H1 (cell line): ENCODE measurements at regions of chr19 and their contacts with region 1.

Region 1: DNA sequence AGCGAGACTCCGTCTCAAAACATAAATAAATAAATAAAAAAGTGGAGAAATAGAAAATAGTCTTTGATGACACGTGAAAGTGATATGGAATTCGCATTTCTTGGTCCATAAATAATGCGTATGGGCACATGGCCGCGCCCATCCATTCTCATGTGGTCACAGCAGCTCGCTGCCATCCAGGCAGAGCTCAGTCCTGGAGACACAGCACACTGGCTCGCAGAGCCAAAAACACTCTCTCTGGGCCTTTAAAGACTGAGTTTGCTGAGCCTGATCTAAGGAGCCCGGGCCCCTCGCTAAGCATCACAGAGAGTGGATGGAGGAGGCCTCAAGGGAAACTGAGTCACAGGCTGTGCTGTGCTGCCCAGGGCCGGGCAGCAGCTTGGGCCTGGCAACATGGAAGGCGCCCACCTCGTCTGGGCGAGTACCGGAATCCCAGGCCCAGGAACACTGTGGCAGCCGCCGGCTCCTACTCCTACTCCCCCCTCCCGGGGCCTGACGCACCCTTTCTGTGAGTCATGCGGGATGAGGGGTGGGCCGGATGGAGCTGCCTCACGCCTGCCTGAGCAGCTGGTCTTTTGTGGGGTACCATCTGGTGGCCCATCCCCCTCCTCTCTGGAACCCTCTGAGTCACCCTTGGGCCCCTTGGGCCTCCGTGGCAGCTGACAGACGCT is 28.9 kb upstream of the CACTIN start:
- DNase-seq: no peak
- H3K4me3 ChIP-seq: no peak overlapping the region
- H3K27ac ChIP-seq: no peak overlapping the region
- H3K4me1 ChIP-seq: no peaks in the 10 kb centered on the region
- H3K27me3 ChIP-seq: no peaks in the 10 kb centered on the region
- CTCF ChIP-seq: no peak
- EP300 ChIP-seq: no peak
- POLR2A ChIP-seq: no peak
- RAD21 ChIP-seq: no peak

Region 2: GRCh38 chr19:3632739-3633558 is 22.6 kb before region 1 on chr19:
- CTCF ChIA-PET with region 1: interaction called, 13 read pairs
- POLR2A ChIA-PET with region 1: interaction called, 4 read pairs
- DNase-seq: no peak
- H3K4me3 ChIP-seq: no peak overlapping the region
- H3K27ac ChIP-seq: no peak overlapping the region; the same call in 1 of the 2 replicates
- H3K4me1 ChIP-seq: no peaks in the 10 kb centered on the region
- H3K27me3 ChIP-seq: no peaks in the 10 kb centered on the region
- CTCF ChIP-seq: no peak
- EP300 ChIP-seq: no peak
- POLR2A ChIP-seq: no peak
- RAD21 ChIP-seq: no peak

Region 3: GRCh38 chr19:3721131-3721886 is 65.8 kb after region 1 on chr19:
- CTCF ChIA-PET with region 1: no interaction called
- POLR2A ChIA-PET with region 1: no interaction called
- DNase-seq: peak; percentile 90 to 100
- H3K4me3 ChIP-seq: peak overlapping the region; percentile 65 to 81 (median 70)
- H3K27ac ChIP-seq: no peak overlapping the region
- H3K4me1 ChIP-seq: peaks cover 0 to 16% (median 10%) of the 10 kb centered on the region in 4 experiments; a peak in 6 of 7 replicates
- H3K27me3 ChIP-seq: peaks cover 0 to 3% (median 0%) of the 10 kb centered on the region in 4 experiments; a peak in 2 of 7 replicates
- CTCF ChIP-seq: no peak
- EP300 ChIP-seq: peak in 1 of 2 experiments; percentile 94; a peak in 2 of 3 replicates
- POLR2A ChIP-seq: no peak
- RAD21 ChIP-seq: peak in 1 of 2 experiments; percentile 24; a peak in 1 of 4 replicates